ENCODE measurements at regions of chr10 and their contacts with region 1.

Region 1: DNA sequence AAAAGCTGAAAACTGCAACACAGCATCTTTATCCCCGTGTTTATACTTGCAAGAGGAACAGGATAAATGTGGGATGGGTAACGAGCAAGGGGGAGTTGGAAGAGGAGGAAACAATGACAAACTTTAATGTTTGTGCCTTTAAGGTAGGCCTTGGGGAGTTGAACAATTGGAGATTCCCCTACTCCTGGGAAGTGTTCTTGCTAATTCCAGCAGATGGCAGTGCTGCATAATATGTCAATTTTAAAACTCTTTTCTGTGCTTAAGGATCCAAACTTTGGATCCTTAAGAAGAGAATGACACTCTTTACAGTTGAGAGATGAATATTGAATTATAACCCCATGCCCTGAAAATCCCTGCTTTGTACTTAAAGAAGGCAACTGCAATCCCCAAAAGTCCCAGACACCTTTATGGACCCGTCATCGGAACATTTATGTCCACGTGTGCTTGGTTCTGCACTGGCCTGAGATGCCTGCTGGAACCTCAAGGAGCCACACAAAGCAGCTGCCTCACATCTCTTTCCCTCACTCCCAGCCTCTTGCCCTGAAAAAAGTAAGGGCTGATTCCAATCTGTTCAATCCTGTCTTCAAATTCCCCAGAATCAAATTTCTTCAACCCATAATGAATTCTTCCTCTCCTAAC is 12.0 kb downstream of the IFIT5 start:
- DNase-seq: no peak
- H3K4me3 ChIP-seq: no peak overlapping the region
- H3K27ac ChIP-seq: no peak overlapping the region
- H3K4me1 ChIP-seq: peaks cover 0 to 13% (median 5%) of the 10 kb centered on the region in 4 experiments; a peak in 2 of 7 replicates
- H3K27me3 ChIP-seq: no peaks in the 10 kb centered on the region
- CTCF ChIP-seq: peak in 2 of 3 experiments; percentile 68 to 78; a peak in 2 of 4 replicates
- EP300 ChIP-seq: no peak
- POLR2A ChIP-seq: no peak
- RAD21 ChIP-seq: peak; percentile 91 to 92

Region 2: GRCh38 chr10:88913127-88913526 is 513.2 kb before region 1 on chr10:
- CTCF ChIA-PET with region 1: no interaction called
- POLR2A ChIA-PET with region 1: no interaction called
- DNase-seq: no peak
- H3K4me3 ChIP-seq: no peak overlapping the region
- H3K27ac ChIP-seq: no peak overlapping the region
- H3K4me1 ChIP-seq: no peaks in the 10 kb centered on the region
- H3K27me3 ChIP-seq: no peaks in the 10 kb centered on the region
- CTCF ChIP-seq: no peak
- EP300 ChIP-seq: no peak
- POLR2A ChIP-seq: no peak
- RAD21 ChIP-seq: no peak

Region 3: GRCh38 chr10:89414146-89414878 is 12.0 kb before region 1 on chr10 and contains the start of gene IFIT5:
- CTCF ChIA-PET with region 1: interaction called, 14 read pairs
- POLR2A ChIA-PET with region 1: interaction called, 3 read pairs
- DNase-seq: no peak
- H3K4me3 ChIP-seq: peak within 1 kb of the TSS; percentile 78 to 82 (median 80)
- H3K27ac ChIP-seq: no peak within 1 kb of the TSS
- H3K4me1 ChIP-seq: peaks cover 0 to 10% (median 3%) of the 10 kb centered on the region in 4 experiments; a peak in 6 of 7 replicates
- H3K27me3 ChIP-seq: peaks cover 0 to 20% (median 15%) of the 10 kb centered on the region in 4 experiments; a peak in 6 of 7 replicates
- CTCF ChIP-seq: peak in 1 of 3 experiments; percentile 6; a peak in 1 of 4 replicates
- EP300 ChIP-seq: no peak
- POLR2A ChIP-seq: peak; percentile 46 to 66
- RAD21 ChIP-seq: 0 out of 4 replicates have a peak, but pooled peaks of 1 of the 2 experiments have one; percentile 0
- total RNA-seq, gene IFIT5: 2.6 TPM in 2 replicates

Region 4: DNA sequence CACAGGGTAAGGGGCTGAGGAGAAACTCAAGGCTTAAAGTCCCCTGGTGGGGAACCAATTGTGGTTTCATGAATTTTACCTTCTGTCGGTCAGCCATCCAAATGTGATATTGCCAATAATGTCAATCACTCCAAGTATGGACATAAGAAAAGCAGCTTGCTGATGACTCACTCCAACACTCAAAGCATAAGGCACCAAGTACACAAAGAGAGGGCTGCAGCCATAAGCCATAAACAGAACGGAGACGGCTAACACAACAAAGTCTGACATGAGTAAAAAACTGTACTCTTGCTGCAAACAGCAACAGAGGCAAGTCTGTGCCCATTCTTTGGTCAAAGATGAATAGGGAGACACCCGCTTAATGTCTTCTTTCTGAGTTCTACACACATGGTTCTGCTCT is 12.2 kb after region 1 on chr10:
- CTCF ChIA-PET with region 1: no interaction called
- POLR2A ChIA-PET with region 1: no interaction called
- DNase-seq: no peak
- H3K4me3 ChIP-seq: no peak overlapping the region
- H3K27ac ChIP-seq: no peak overlapping the region
- H3K4me1 ChIP-seq: peaks cover 0 to 2% (median 0%) of the 10 kb centered on the region in 4 experiments; a peak in 1 of 7 replicates
- H3K27me3 ChIP-seq: no peaks in the 10 kb centered on the region; a peak in 1 of 7 replicates
- CTCF ChIP-seq: no peak
- EP300 ChIP-seq: no peak
- POLR2A ChIP-seq: no peak
- RAD21 ChIP-seq: no peak

Measured in H1 (cell line).